IMR-90 (cell line): ENCODE measurements at regions of chr11 and their contacts with region 1.

Region 1: DNA sequence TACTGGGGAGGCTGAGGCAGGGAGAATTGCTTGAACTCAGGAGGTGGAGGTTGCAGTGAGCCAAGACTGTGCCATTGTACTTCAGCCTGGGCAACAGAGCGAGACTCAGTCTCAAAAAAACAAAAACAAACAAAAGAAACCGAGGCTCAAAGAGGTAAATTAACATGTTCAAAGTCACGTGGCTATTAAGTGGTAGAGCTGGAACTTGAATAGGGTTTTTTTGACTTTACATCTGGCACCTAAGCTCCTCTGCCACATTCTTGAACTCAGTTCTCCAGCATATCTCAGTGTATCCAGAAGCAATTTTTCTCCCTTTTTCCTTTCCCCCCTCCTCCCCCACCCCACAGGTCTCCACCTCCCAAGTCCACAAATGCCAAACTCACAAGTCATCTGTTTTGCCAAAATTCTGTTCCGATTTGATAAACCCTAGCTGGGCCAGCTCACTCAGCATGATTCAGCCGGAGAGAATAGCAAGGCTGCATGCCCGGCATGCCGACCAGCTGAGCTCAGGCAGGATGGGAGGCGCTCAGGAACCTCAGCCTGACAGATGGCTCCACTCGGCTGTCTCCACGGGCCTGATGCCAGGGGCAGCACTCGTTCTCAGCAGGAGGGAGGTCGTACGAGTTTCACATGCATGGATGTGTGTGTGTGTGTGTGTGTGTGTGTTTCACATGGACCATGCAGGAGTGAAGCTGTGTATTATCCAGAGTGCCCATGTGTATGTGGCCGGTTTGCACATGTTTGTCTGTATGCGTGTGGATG is 63.2 kb upstream of the RRAS2 start:
- DNase-seq: peak; percentile 100
- ATAC-seq: peak; percentile 89
- H3K4me3 ChIP-seq: no peak overlapping the region
- H3K27ac ChIP-seq: peak overlapping the region; percentile 67
- H3K4me1 ChIP-seq: peaks cover 22% of the 10 kb centered on the region
- H3K27me3 ChIP-seq: no peaks in the 10 kb centered on the region
- CTCF ChIP-seq: no peak
- POLR2A ChIP-seq: no peak
- RAD21 ChIP-seq: 0 out of 2 replicates have a peak, but pooled peaks have one; percentile 17

Region 2: GRCh38 chr11:14300661-14301304 is 121.5 kb before region 1 on chr11:
- CTCF ChIA-PET with region 1: interaction called, 12 read pairs
- POLR2A ChIA-PET with region 1: no interaction called
- dilution Hi-C with region 1: no loop called
- in situ Hi-C with region 1: no loop called
- intact Hi-C with region 1: no loop called
- DNase-seq: peak; percentile 74
- ATAC-seq: peak; percentile 90
- H3K4me3 ChIP-seq: no peak overlapping the region
- H3K27ac ChIP-seq: 0 out of 2 replicates have a peak overlapping the region, but pooled peaks have one; percentile 4
- H3K4me1 ChIP-seq: peaks cover 5% of the 10 kb centered on the region
- H3K27me3 ChIP-seq: no peaks in the 10 kb centered on the region
- CTCF ChIP-seq: peak; percentile 87
- POLR2A ChIP-seq: 0 out of 2 replicates have a peak, but pooled peaks have one; percentile 25
- RAD21 ChIP-seq: peak; percentile 95

Region 3: GRCh38 chr11:14380947-14381561 is 41.2 kb before region 1 on chr11:
- CTCF ChIA-PET with region 1: interaction called, 3 read pairs
- POLR2A ChIA-PET with region 1: no interaction called
- dilution Hi-C with region 1: no loop called
- in situ Hi-C with region 1: no loop called
- intact Hi-C with region 1: loop called (anchors 5 kb)
- DNase-seq: peak; percentile 36
- ATAC-seq: peak; percentile 80
- H3K4me3 ChIP-seq: peak overlapping the region; percentile 42
- H3K27ac ChIP-seq: peak overlapping the region; percentile 21; the same call in 1 of the 2 replicates
- H3K4me1 ChIP-seq: peaks cover 6% of the 10 kb centered on the region
- H3K27me3 ChIP-seq: no peaks in the 10 kb centered on the region
- CTCF ChIP-seq: no peak
- POLR2A ChIP-seq: no peak
- RAD21 ChIP-seq: no peak